ENCODE measurements at regions of chr13 and their contacts with region 1.

Region 1: GRCh38 chr13:30114571-30115256 is 192.6 kb downstream of the KATNAL1 start:
- DNase-seq: peak; percentile 95
- H3K4me3 Mint-ChIP-seq: peak overlapping the region; percentile 74
- H3K27ac Mint-ChIP-seq: no peak overlapping the region
- H3K4me1 Mint-ChIP-seq: peaks cover 32% of the 10 kb centered on the region
- H3K27me3 Mint-ChIP-seq: peaks cover 1% of the 10 kb centered on the region

Region 2: DNA sequence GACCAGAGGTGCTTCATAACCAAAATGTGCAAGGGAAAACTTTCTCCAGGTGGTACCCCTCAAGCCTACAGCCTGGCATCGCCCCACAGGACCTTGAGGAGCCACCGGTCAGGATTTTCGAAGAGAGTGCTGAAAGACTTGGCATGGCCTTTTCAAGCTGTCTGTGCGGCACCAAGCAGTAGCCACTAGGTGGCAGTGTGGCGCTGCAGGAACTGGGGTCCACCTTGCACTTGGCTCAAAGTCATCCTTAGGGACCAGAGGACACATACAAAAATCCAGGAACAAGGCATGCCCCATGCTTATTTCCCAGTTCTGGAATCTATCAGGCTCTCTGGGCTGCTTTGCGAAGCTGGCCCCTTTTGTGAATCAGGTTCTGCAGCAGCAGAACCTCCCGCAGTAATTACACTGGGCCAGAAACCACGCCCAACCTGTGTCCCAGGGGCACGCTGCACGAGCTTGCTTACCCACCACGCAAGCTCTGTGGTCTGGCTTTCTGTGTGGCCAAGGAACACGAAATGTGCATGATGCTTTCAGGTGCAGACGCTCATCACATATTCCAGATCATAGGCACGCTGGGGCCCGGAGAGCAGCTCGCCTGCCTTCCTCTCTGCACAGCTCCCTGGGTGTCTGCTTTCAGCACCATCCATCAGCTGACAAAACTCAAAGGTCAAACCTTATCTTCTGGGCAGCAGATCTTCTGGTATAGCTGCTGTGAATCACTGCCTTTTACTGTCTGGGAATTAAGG is 606.4 kb before region 1 on chr13:
- CTCF ChIA-PET with region 1: interaction called, 13 read pairs
- POLR2A ChIA-PET with region 1: no interaction called
- intact Hi-C with region 1: loop called (anchors 1 kb)
- DNase-seq: peak; percentile 82
- H3K4me3 Mint-ChIP-seq: no peak overlapping the region
- H3K27ac Mint-ChIP-seq: no peak overlapping the region
- H3K4me1 Mint-ChIP-seq: no peaks in the 10 kb centered on the region
- H3K27me3 Mint-ChIP-seq: peaks cover 2% of the 10 kb centered on the region

Region 3: DNA sequence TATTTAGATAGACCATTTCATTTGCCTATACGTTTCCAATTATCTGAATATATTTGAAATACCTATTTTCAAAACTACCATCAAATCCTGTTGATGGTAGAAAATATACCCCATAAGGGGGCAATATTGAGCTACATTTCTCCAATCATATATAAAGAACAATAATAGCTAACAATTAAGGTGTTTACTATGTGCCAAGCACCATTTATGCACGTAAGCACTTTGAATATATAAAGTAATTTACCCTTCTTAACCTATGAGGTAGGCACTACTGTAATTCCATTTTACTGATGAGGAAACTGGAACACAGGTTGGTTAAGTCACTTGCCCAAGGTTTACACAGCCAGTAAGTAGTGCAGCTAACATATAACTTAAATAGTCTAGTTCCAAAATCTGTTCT is 343.5 kb before region 1 on chr13:
- CTCF ChIA-PET with region 1: interaction called, 331 read pairs
- POLR2A ChIA-PET with region 1: no interaction called
- intact Hi-C with region 1: loop called (anchors 1 kb)
- DNase-seq: no peak
- H3K4me3 Mint-ChIP-seq: no peak overlapping the region
- H3K27ac Mint-ChIP-seq: no peak overlapping the region
- H3K4me1 Mint-ChIP-seq: peaks cover 4% of the 10 kb centered on the region
- H3K27me3 Mint-ChIP-seq: no peaks in the 10 kb centered on the region

Region 4: GRCh38 chr13:29923554-29924481 is 190.9 kb before region 1 on chr13:
- CTCF ChIA-PET with region 1: interaction called, 17 read pairs
- POLR2A ChIA-PET with region 1: no interaction called
- intact Hi-C with region 1: no loop called
- DNase-seq: peak; percentile 87
- H3K4me3 Mint-ChIP-seq: no peak overlapping the region
- H3K27ac Mint-ChIP-seq: no peak overlapping the region
- H3K4me1 Mint-ChIP-seq: peaks cover 25% of the 10 kb centered on the region
- H3K27me3 Mint-ChIP-seq: no peaks in the 10 kb centered on the region

Region 5: GRCh38 chr13:30045916-30046704 is 68.6 kb before region 1 on chr13:
- CTCF ChIA-PET with region 1: interaction called, 10 read pairs
- POLR2A ChIA-PET with region 1: no interaction called
- intact Hi-C with region 1: no loop called
- DNase-seq: no peak
- H3K4me3 Mint-ChIP-seq: no peak overlapping the region
- H3K27ac Mint-ChIP-seq: no peak overlapping the region
- H3K4me1 Mint-ChIP-seq: peaks cover 9% of the 10 kb centered on the region
- H3K27me3 Mint-ChIP-seq: no peaks in the 10 kb centered on the region

Region 6: GRCh38 chr13:30142486-30143211 is 27.9 kb after region 1 on chr13:
- CTCF ChIA-PET with region 1: interaction called, 18 read pairs
- POLR2A ChIA-PET with region 1: interaction called, 9 read pairs
- intact Hi-C with region 1: no loop called
- DNase-seq: peak; percentile 68
- H3K4me3 Mint-ChIP-seq: no peak overlapping the region
- H3K27ac Mint-ChIP-seq: peak overlapping the region; percentile 92
- H3K4me1 Mint-ChIP-seq: peaks cover 70% of the 10 kb centered on the region
- H3K27me3 Mint-ChIP-seq: no peaks in the 10 kb centered on the region

Region 7: DNA sequence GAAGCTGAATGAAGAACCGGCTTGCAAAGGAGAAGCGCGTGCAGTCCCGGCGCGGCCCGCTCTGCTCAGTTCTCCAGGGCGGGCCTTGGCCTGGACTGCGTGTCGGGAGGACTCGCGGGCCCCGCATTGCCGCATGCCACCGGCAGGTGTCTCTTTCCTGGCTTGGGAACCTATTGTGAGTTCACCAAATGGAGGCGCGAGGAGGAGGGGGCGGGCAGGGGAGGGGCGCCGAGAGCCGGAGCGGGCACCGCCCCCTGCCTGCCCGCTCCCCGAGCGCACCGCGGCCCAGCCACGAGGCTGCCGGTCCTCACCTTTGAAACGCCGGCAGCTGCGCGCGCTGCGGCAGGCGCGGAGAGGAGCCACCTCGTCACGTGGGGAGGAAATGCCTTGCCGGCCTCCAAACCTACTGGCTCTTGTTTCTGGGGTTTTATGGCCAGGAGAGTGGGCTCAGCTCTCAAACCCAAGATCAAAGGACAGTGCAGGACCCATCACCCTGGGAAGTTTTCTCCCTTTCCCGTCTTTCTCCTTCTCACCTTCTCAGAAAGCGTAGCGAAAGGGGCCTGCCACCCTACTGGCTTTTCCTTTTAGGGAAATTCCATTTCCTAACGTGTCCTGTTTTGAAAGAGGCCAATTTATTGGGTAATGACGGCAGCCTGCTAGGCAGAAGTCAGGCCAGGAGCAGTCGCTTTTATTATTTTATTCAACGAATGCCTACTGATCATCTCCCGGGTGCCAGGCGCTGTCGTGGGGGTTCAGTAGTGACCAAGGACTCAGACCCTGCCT is 293.8 kb after region 1 on chr13:
- CTCF ChIA-PET with region 1: no interaction called
- POLR2A ChIA-PET with region 1: no interaction called
- intact Hi-C with region 1: no loop called
- DNase-seq: peak; percentile 97
- H3K4me3 Mint-ChIP-seq: peak overlapping the region; percentile 43
- H3K27ac Mint-ChIP-seq: peak overlapping the region; percentile 2
- H3K4me1 Mint-ChIP-seq: peaks cover 18% of the 10 kb centered on the region
- H3K27me3 Mint-ChIP-seq: no peaks in the 10 kb centered on the region